Activated B cell treated with CpG ODN at 0.5 μM for 24 hours (primary cell): ENCODE measurements at regions of chr9 and their contacts with region 1.

Region 1: DNA sequence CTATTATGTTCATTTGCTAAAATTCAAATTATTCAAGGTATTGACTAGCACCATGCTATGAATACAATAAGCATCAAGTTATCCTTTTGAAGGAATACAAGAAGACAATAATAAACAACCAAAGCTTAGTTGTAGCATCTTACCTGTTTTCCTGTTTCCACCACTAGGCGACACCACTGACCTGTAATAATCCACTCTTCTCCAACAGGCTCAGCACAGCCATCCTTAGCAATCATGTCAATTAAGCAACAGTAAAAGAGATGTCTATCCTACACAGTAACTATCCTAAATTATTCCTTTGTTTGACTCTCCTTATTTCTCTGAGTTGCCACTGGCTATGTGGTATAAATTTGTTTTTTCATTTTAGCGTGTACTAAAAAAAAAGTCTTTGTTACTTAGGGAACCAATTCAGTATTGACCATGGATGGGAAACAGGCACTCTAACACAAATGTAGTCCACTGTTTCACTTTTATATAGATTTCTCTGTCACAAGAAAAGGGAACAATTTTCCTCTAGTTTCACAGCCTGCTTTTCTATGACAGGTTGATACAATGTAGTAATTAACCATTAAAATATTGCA is 46.2 kb downstream of the PCA3 start:
- DNase-seq: no peak
- ATAC-seq: no peak
- H3K4me3 Mint-ChIP-seq: no peak overlapping the region
- H3K27ac Mint-ChIP-seq: no peak overlapping the region
- H3K4me1 Mint-ChIP-seq: no peaks in the 10 kb centered on the region
- H3K27me3 Mint-ChIP-seq: peaks cover 17% of the 10 kb centered on the region
- CTCF ChIP-seq: no peak

Region 2: DNA sequence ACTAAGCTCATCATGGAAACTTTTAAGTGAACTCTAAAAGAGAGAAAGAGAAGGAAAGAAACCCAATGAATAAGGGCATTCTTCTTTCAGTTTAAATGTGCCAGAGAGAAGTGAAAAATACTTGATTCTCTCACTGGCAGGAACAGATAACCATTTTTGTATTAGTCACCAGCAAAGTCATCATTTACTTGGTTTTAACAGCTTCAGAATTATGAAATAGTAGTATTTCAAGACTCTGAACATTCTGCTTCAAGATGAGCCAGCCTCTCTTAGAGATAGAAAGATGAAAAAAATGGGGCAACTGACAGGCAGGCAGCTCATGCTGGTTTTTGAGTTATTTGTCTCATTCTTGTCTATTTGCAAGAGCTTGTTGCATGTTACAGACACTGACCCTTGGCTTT is 248.0 kb before region 1 on chr9:
- CTCF ChIA-PET with region 1: no interaction called
- POLR2A ChIA-PET with region 1: no interaction called
- intact Hi-C with region 1: no loop called
- DNase-seq: no peak
- ATAC-seq: peak; percentile 57
- H3K4me3 Mint-ChIP-seq: peak overlapping the region; percentile 55
- H3K27ac Mint-ChIP-seq: peak overlapping the region; percentile 65
- H3K4me1 Mint-ChIP-seq: peaks cover 63% of the 10 kb centered on the region
- H3K27me3 Mint-ChIP-seq: no peaks in the 10 kb centered on the region
- CTCF ChIP-seq: no peak

Region 3: DNA sequence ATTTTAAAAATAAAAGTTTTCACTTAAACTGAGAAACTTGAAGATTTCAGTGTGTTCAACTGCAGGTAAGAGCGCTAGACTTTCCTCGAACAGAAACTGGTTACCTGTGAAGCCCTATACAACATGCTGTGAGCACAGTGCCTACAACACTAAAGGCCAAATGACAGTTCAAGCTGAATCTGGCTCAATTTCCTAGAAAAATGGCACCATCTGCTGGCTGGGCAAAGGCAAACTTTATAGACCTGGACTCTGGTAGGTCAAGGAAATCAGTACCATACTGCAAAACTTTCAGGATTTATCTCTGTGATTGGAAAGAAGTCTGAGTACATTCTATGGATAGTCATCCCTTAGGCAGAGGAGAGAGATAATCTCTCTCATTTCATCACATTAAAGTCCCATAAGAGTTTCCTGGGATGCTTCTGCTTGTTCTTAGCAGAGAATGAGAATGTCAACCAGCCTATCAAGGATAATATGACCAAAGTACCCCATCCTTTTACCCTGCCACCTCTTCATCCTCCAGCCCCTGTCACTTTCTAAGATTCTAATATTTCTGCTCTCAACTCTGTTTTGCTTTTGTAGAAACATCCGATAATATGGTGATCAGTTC is 177.2 kb after region 1 on chr9:
- CTCF ChIA-PET with region 1: no interaction called
- POLR2A ChIA-PET with region 1: no interaction called
- intact Hi-C with region 1: loop called (anchors 1 kb)
- DNase-seq: no peak
- ATAC-seq: no peak
- H3K4me3 Mint-ChIP-seq: no peak overlapping the region
- H3K27ac Mint-ChIP-seq: no peak overlapping the region
- H3K4me1 Mint-ChIP-seq: no peaks in the 10 kb centered on the region
- H3K27me3 Mint-ChIP-seq: peaks cover 12% of the 10 kb centered on the region
- CTCF ChIP-seq: no peak